Colonic mucosa (tissue), 4 donors: ENCODE measurements at regions of chr15 and their contacts with region 1.

Region 1: GRCh38 chr15:73697033-73697467 is 12.9 kb downstream of the CD276 start:
- DNase-seq: peak; percentile 78
- H3K4me3 ChIP-seq: no peak overlapping the region
- H3K27ac ChIP-seq: peak overlapping the region; percentile 1
- H3K4me1 ChIP-seq: no peaks in the 10 kb centered on the region
- H3K27me3 ChIP-seq: no peaks in the 10 kb centered on the region
- CTCF ChIP-seq: no peak

Region 2: GRCh38 chr15:73305331-73306211 is 391.5 kb before region 1 on chr15:
- intact Hi-C with region 1: loop called (anchors 10 kb)
- DNase-seq: peak; percentile 28
- H3K4me3 ChIP-seq: no peak overlapping the region
- H3K27ac ChIP-seq: no peak overlapping the region
- H3K4me1 ChIP-seq: no peaks in the 10 kb centered on the region
- H3K27me3 ChIP-seq: no peaks in the 10 kb centered on the region
- CTCF ChIP-seq: peak; percentile 41

Region 3: DNA sequence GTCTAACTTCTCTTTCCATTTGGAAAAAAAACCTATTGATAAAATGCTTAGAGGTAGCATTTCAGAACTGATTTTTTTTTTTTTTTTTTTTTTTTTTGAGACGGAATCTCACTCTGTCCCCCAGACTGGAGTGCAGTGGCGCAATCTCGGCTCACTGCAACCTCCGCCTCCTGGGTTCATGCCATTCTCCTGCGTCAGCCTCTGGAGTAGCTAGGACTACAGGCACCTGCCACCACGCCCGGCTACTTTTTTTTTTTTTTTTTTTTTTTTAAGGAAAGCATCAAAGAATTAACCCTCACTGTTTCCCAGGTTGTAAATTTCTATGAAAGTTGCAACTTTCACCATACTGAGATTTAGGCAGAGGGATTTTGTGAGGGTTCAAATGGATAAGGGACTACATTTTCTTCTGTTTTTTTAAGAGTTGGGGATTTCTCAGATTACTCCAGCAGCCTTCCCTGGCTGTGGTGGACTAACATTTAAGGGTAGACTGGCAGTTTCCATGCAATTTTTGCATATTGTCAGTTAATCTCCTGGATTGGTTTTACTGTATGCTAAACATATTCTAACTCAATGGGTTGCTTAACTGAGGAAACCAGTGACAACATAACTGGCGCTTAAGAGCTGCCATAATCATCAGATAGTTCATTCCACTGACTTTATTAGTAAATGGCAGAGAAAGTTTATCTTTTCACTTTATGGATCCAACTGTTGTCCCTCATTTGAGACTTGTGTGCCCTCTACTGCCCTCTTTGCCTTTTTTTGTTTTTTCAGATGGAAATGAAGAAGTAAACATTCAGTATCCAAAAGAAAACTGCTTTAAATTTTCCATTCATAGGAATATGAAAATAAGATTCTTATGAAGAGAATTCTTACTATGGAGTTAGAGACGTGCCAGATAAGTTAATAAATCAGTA is 157.6 kb before region 1 on chr15:
- intact Hi-C with region 1: no loop called
- DNase-seq: peak; percentile 46
- H3K4me3 ChIP-seq: no peak overlapping the region
- H3K27ac ChIP-seq: no peak overlapping the region
- H3K4me1 ChIP-seq: no peaks in the 10 kb centered on the region
- H3K27me3 ChIP-seq: no peaks in the 10 kb centered on the region
- CTCF ChIP-seq: no peak

Region 4: DNA sequence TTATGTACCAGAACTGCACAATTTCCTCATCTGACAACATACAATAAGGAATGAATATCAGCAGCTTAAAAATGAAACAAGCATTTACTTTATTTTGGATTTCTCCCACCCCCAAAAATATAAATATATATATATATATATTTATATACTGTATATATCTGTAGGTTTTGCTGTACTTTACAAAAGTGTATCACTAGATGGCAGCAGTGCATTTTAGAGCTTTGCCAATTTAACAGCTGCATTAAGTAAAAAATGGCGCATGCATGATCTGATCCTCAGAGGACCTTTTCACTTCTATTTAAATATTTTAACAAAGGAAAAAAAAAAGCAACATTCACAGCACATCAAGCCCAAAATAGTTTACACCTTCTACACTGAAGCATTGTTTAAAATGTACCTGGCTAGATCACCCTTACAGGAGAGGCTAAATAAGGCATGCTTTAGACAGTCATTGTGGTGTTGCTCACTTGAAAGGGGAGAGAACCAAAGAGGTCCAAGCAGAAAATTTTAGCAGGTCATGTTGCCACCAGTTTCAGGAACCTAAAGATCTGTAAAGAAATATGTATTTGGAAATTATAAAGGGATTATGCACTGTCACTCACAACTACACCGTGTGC is 136.4 kb before region 1 on chr15:
- intact Hi-C with region 1: loop called (anchors 5 kb)
- DNase-seq: peak; percentile 38
- H3K4me3 ChIP-seq: no peak overlapping the region
- H3K27ac ChIP-seq: no peak overlapping the region
- H3K4me1 ChIP-seq: no peaks in the 10 kb centered on the region
- H3K27me3 ChIP-seq: no peaks in the 10 kb centered on the region
- CTCF ChIP-seq: peak; percentile 30

Region 5: GRCh38 chr15:73637527-73637926 is 59.5 kb before region 1 on chr15:
- intact Hi-C with region 1: loop called (anchors 2 kb)
- DNase-seq: no peak
- H3K4me3 ChIP-seq: no peak overlapping the region
- H3K27ac ChIP-seq: no peak overlapping the region
- H3K4me1 ChIP-seq: peaks cover 4% of the 10 kb centered on the region
- H3K27me3 ChIP-seq: no peaks in the 10 kb centered on the region
- CTCF ChIP-seq: no peak

Region 6: DNA sequence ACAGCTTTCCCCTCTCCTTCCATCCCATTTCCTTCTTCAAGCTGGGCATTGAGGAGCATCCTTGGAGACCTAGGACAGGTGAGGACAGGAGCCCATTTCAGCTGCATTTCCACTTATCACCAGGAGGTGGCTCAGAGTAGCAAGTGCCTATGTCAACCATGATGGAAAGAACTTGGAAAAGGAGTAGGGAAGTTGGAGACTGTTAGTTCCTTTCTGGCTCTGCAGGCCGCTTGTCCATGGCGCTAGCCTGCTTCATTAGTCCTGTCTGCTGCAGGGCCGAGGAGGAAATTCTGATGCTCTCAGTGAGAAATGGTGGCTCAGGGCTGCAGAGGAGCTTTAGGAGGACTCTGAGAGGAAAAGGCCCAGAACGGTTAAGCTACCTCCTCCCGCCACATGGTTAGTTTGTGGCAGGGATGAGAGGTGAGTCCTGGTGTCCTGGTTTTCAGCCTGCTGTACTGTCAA is 19.9 kb before region 1 on chr15:
- intact Hi-C with region 1: loop called (anchors 2 kb)
- DNase-seq: peak; percentile 83
- H3K4me3 ChIP-seq: no peak overlapping the region
- H3K27ac ChIP-seq: no peak overlapping the region
- H3K4me1 ChIP-seq: no peaks in the 10 kb centered on the region
- H3K27me3 ChIP-seq: no peaks in the 10 kb centered on the region
- CTCF ChIP-seq: peak; percentile 77